ENCODE measurements at regions of chr9 and their contacts with region 1.

Region 1: GRCh38 chr9:20544953-20545622 is 77.2 kb downstream of the MLLT3 start:
- DNase-seq: no peak
- H3K4me3 ChIP-seq: no peak overlapping the region
- H3K27ac ChIP-seq: no peak overlapping the region
- H3K4me1 ChIP-seq: no peaks in the 10 kb centered on the region
- H3K27me3 ChIP-seq: no peaks in the 10 kb centered on the region
- CTCF ChIP-seq: no peak

Region 2: DNA sequence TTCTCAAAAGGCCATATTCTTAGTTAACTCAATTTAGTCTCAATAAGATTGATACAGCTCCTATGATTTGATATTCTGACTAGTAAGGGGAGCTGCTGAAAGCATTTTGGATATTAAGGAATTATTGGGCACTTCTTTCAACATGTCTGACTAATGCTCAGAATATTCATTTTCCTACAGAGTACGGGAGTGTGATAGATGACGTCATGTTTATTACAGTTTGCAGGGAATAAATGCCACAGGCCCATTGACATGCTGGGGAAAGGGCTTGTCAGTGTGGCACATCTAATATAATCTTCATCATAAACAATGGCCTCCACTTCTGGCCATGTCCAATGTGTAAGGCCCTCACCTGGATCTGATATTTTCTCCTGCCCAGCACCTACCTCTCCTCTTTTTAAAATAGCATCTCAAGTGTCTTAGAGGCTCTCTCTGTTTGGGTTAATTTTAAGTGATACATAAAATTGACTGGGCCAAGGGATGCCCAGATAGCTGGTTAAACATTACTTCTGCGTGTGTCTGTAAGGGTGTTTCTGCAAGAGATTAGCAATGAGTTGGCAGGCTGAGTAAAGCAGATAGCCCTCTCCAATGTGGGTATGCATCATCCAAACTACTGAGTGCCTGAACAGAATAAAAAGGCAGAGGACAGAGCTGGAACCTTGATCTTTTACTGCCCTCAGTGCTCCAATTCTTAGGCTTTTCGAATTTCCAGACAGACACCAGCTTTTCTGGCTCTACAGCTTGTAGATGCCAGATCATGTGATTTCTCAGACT is 855.6 kb before region 1 on chr9:
- intact Hi-C with region 1: loop called (anchors 10 kb)
- DNase-seq: no peak
- H3K4me3 ChIP-seq: no peak overlapping the region
- H3K27ac ChIP-seq: no peak overlapping the region
- H3K4me1 ChIP-seq: no peaks in the 10 kb centered on the region
- H3K27me3 ChIP-seq: no peaks in the 10 kb centered on the region
- CTCF ChIP-seq: no peak